BJ (cell line): ENCODE measurements at regions of chr1 and their contacts with region 1.

Region 1: DNA sequence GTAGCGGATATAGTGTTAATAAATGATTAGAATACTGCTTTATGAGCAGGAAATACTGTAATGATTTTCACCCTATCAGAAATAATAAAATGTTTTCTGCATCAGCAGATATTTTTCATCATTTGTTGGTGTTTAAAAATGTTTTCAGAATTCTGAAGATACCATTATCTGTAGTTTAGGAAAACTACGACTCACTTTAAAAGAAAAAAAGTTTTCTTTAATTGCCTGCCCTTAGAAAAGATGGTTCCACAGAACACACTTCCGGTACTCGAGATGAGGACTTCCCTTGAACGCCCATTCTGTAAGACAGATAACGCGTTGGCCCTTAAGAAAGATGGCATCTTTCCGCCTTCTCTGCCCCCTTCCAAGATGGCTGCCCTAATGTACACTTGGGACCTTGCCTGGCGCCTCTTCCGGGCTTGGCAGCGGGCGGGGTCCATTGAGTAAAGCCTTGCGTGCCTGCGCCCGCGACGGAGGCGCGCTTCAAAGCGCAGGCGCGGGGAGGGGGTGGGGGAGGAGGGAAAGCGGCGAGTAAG is at the start of gene SZRD1:
- DNase-seq: peak; percentile 98
- H3K4me3 ChIP-seq: peak within 1 kb of the TSS; percentile 86
- H3K27me3 ChIP-seq: no peaks in the 10 kb centered on the region
- CTCF ChIP-seq: no peak
- polyA plus RNA-seq, gene SZRD1: 94.9 and 125 TPM in 2 replicates

Region 2: GRCh38 chr1:16073490-16074119 is 293.2 kb before region 1 on chr1 and contains the start of gene FAM131C:
- CTCF ChIA-PET with region 1: interaction called, 63 read pairs
- POLR2A ChIA-PET with region 1: interaction called, 4 read pairs
- DNase-seq: no peak
- H3K4me3 ChIP-seq: peak within 1 kb of the TSS; percentile 48
- H3K27me3 ChIP-seq: no peaks in the 10 kb centered on the region
- CTCF ChIP-seq: no peak
- polyA plus RNA-seq, gene FAM131C: 0.34 and 0.47 TPM in 2 replicates

Region 3: GRCh38 chr1:16187748-16188401 is 178.9 kb before region 1 on chr1:
- CTCF ChIA-PET with region 1: interaction called, 20 read pairs
- POLR2A ChIA-PET with region 1: interaction called, 3 read pairs
- DNase-seq: no peak
- H3K4me3 ChIP-seq: no peak overlapping the region
- H3K27me3 ChIP-seq: no peaks in the 10 kb centered on the region
- CTCF ChIP-seq: peak; percentile 97

Region 4: DNA sequence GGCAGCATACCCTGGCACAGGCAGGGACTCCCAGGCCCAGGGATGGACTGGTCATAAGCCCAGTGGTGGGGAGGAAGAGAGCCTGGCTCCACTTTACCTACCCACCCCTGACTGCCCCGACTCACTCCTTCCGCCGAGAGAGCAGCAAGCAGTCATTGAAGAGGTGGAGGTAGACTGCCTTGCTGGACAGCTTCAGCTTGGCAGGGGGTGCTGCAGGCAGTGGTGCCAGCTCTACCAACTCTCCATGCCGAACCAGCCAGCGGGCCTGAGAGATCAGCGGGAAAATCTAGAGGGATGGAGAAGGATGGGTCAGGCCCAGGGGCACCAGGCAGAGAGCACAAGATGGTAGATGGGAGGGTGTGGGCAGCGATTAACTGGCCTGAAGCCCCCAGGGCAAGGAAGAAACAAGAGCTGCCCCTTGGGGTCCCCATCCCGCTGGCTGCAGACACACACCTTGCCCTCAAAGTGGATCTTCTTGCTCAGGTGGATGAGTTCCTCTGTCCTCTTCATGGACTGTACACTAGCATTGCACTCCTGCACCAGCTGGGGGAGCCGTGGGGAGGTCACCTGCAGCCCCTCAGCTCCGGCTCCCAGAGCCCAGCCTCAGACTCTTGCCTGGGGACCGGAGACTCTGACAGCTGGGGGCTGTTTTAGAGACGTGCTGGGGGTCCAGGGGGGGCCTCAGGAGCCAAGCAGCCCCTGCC is 162.0 kb before region 1 on chr1:
- CTCF ChIA-PET with region 1: interaction called, 13 read pairs
- POLR2A ChIA-PET with region 1: interaction called, 8 read pairs
- DNase-seq: no peak
- H3K4me3 ChIP-seq: no peak overlapping the region
- H3K27me3 ChIP-seq: no peaks in the 10 kb centered on the region
- CTCF ChIP-seq: peak; percentile 45

Region 5: DNA sequence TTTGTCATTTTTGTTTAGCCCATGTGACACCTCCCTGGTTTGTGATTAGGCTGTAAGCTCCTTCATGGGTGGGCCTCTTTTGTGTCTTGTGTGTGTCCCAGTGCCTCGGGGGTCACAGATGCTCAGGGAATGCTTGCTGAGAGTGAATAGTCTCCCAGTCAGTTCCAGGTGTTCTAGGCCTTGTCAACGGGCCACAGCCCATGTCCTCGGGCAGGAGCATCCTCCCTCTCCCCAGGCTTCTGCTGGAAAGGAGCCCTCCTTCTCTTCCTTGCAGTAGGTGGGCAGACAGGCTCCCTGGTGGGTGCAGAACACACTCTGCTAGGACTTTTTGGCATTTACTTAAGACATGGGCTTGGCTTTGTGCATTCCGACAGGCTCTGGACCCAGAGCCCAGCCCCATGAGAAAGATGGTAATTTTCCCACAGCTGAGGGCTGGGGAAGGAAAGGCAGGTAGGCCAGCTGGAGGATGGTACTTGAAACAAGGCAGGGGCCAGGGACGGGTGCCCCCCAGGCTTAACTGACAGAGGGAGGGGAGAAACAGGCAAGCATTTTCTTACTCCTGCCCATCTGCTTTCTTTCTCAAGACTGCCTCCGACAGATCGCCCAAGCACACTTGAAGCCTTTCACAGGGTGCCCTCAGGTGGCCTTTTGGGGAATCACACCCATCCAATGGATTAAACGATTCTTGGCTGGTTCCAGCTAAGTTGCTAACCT is 122.7 kb before region 1 on chr1:
- CTCF ChIA-PET with region 1: interaction called, 14 read pairs
- POLR2A ChIA-PET with region 1: interaction called, 8 read pairs
- DNase-seq: no peak
- H3K4me3 ChIP-seq: no peak overlapping the region
- H3K27me3 ChIP-seq: no peaks in the 10 kb centered on the region
- CTCF ChIP-seq: peak; percentile 89

Region 6: GRCh38 chr1:16302709-16303627 is 63.8 kb before region 1 on chr1:
- CTCF ChIA-PET with region 1: no interaction called
- POLR2A ChIA-PET with region 1: no interaction called
- DNase-seq: no peak
- H3K4me3 ChIP-seq: no peak overlapping the region
- H3K27me3 ChIP-seq: no peaks in the 10 kb centered on the region
- CTCF ChIP-seq: no peak

Region 7: DNA sequence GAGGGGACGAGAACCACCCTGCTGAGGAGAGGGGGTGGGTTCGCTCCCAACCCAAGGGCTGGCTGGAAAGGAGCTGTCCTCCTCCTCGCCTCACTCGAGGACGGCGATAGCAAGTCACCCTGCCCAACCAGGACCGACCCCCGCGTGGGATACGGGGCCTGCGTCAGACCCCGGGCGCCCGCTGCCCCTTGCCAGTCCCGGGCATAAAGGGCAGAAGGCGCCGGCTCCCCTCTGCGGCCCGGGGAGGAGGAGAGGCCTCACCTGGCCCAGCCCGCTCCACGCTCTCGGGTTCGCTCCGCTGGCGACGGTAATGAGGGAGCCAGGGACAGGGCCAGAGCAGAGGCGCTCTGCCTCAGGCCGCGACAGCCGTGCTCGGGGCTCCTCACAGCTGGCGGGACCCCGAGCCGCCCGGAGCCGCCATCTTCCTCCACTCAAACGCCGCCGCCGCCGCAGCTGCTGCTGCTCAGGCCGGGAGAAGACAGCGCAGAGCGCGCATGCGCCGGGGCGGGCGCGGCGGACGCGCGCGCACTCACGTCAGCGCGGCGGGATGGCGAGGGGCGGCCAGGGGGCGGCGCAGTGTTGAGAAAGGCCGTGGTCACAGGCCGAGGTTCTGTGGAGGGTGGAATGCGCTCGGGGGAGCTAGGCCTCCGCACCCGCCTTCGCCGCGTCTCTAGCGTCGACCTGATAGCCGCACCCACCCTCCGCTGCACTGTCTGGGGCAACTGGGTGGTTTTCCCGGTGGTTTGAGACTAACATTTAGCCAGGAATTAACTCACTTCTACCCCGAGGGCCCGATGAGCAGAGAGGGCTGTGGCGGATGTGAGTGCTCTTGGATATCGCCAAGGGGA is 14.6 kb before region 1 on chr1 and contains the start of gene FBXO42:
- CTCF ChIA-PET with region 1: interaction called, 28 read pairs
- POLR2A ChIA-PET with region 1: no interaction called
- DNase-seq: peak; percentile 69
- H3K4me3 ChIP-seq: peak within 1 kb of the TSS; percentile 81
- H3K27me3 ChIP-seq: no peaks in the 10 kb centered on the region
- CTCF ChIP-seq: peak; percentile 31; the same call in 1 of the 2 replicates
- polyA plus RNA-seq, gene FBXO42: 19.7 and 31.7 TPM in 2 replicates

Region 8: DNA sequence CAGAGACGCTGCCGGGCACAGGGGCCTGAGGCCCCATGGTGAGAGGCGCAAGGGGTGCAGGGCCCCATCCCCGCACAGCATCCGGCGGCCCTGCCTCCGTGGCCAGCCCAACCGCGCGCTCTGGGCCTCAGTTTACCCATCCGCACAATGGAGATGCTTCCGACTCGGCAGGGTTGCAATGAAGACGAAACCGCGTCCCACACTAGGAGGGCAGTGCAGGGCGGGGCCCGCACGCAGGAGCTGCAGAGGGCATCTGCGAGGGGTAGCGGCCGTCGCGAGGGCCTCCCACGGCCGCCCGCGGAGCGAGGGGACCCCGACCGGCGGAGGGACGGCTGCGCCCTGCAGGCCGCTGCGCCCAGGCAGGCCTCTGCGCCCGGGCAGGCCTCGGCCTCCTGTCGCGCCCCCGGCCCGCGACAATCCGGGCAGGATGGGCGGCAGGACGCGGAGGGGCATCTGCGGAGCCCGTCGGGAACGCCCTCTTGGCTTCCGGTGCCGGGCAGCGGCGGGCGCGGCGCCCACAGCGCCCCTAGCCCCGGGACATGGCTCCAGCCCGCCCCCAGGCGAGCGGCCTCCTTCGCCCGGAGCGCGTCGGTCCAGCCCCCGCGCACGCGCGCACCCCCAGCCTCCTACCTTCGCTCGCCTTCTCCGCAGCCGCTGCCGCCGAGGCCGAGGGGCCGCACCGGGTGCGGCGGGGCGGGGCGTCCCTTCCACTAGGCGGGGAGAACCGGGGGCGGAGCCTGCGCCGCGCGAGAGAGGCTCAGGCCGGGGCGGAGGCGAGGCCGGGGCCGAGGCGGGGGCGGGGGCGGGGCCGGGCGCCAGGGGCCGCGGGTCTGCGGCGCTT is 132.0 kb after region 1 on chr1:
- CTCF ChIA-PET with region 1: no interaction called
- POLR2A ChIA-PET with region 1: no interaction called
- DNase-seq: no peak
- H3K4me3 ChIP-seq: peak overlapping the region; percentile 84
- H3K27me3 ChIP-seq: no peaks in the 10 kb centered on the region
- CTCF ChIP-seq: no peak